Astrocyte of the cerebellum (primary cell): ENCODE measurements at regions of chr14 and their contacts with region 1.

Region 1: GRCh38 chr14:50335389-50335788 is 23.3 kb downstream of the DMAC2L start:
- DNase-seq: peak; percentile 74
- H3K4me3 ChIP-seq: no peak overlapping the region
- CTCF ChIP-seq: peak; percentile 23

Region 2: GRCh38 chr14:49999216-49999761 is 336.1 kb before region 1 on chr14:
- in situ Hi-C with region 1: no loop called
- DNase-seq: peak; percentile 45
- H3K4me3 ChIP-seq: no peak overlapping the region
- CTCF ChIP-seq: no peak

Region 3: DNA sequence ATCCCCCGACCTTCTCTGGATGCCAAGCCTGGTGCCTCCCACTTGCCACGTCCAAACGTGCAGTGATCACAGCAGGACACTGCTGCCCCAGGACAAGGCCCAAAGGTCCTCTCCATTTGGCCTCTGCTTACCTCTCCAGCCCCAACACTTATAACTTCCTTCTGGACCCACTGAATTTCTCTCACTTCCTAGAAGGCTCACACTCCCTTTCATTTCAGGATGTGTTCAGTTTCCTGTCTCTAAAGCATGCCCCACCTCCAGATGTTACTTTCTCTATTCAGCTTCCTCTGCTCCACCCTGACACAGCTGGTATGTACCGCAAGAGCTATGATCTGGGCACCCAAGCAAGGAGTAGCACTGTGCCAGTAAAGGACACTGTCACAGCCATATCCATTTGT is 28.3 kb after region 1 on chr14:
- in situ Hi-C with region 1: no loop called
- DNase-seq: no peak
- H3K4me3 ChIP-seq: no peak overlapping the region
- CTCF ChIP-seq: no peak

Region 4: DNA sequence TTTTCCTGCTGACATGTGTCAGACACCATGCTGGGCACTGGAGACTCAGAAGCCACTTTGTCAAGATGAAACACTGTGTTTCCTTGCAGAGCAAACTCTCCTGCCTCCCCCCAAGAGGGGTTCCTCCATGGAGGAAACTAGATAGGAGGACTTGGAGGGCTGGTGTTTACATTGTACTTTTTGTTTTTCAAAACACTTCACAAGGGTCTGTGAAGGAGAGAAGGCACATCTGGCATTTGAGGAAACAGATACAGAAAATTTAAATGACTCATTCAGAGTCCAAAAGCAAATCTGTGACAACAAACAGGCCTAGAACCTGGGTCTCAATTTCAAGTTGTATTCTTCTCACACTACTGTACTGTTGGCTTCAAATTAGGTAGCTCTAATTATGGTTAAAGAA is 68.0 kb after region 1 on chr14:
- in situ Hi-C with region 1: no loop called
- DNase-seq: no peak
- H3K4me3 ChIP-seq: no peak overlapping the region
- CTCF ChIP-seq: no peak

Region 5: GRCh38 chr14:50520947-50521815 is 185.8 kb after region 1 on chr14:
- in situ Hi-C with region 1: loop called (anchors 10 kb)
- DNase-seq: peak; percentile 63
- H3K4me3 ChIP-seq: no peak overlapping the region
- CTCF ChIP-seq: no peak